MCF 10A (cell line): ENCODE measurements at regions of chr11 and their contacts with region 1.

Region 1: DNA sequence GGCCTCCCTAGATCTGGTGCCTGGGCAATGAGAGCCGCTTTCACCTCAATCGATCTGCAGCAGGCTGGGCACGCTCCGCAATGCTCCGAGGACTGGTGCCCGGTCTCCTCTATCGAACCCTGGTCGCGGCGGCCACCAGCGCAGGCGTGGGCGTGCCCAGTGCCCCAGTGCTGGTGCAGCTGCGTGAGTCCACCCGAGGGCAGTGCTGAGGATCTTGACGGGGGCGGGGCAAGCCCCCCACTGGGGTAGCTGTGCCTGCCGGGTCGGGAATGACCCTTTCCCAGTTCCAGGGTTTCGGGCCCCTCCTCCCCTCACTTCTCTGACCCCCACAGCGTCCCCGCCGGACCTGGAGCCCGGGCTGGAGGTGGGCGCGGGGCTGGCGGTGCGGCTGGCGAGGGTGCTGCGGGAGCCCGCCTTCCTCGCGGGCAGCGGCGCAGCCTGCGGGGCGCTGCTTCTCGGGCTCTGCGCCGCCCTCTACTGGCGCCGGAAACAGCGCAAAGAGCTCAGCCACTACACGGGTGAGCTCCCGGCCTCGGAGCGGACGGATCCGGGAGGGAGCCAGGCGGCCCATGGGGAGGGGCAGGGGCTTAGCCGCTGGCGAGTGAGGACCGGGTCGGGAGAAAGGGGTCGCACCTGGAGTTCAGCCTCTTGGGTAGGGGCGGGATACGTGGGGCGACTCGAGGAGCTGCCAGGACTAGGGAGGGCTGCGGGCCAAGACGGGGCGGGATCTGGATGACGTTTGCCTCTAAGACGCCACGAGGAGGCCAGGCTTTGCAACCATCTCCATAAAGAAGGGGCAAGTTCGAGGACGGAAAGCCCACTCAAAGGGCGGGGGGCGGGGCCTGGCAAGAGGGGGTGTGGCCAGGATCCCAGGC is 10.9 kb downstream of the ROBO3 start:
- DNase-seq: peak; percentile 95
- H3K4me3 Mint-ChIP-seq: peak overlapping the region; percentile 96
- H3K27ac Mint-ChIP-seq: peak overlapping the region; percentile 95
- H3K4me1 Mint-ChIP-seq: peaks cover 23% of the 10 kb centered on the region
- H3K27me3 Mint-ChIP-seq: peaks cover 20% of the 10 kb centered on the region
- CTCF ChIP-seq: peak; percentile 45

Region 2: DNA sequence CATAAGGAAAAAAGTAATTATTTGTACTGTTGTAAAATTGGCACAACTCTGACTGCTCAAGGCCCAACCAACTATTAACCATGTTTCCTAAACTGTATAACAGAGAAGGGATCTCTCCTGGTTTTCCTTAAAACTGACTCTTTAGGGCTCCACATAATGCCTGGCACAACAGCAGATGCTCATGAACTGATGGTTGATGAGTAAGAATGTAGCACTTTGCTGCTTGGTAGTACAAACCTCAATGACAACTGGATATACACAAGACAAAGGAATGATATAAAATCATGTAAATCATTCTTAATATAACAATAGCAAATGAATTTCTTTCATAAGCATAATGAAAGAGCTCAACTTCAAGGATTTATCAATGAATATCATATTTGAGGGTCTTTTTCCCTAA is 87.7 kb before region 1 on chr11:
- CTCF ChIA-PET with region 1: no interaction called
- POLR2A ChIA-PET with region 1: no interaction called
- intact Hi-C with region 1: no loop called
- DNase-seq: no peak
- H3K4me3 Mint-ChIP-seq: no peak overlapping the region
- H3K27ac Mint-ChIP-seq: no peak overlapping the region
- H3K4me1 Mint-ChIP-seq: peaks cover 16% of the 10 kb centered on the region
- H3K27me3 Mint-ChIP-seq: no peaks in the 10 kb centered on the region
- CTCF ChIP-seq: no peak

Region 3: GRCh38 chr11:124865921-124866583 is 10.1 kb before region 1 on chr11:
- CTCF ChIA-PET with region 1: interaction called, 20 read pairs
- POLR2A ChIA-PET with region 1: no interaction called
- intact Hi-C with region 1: no loop called
- DNase-seq: peak; percentile 13
- H3K4me3 Mint-ChIP-seq: peak overlapping the region; percentile 47
- H3K27ac Mint-ChIP-seq: no peak overlapping the region
- H3K4me1 Mint-ChIP-seq: no peaks in the 10 kb centered on the region
- H3K27me3 Mint-ChIP-seq: peaks cover 88% of the 10 kb centered on the region
- CTCF ChIP-seq: peak; percentile 80

Region 4: DNA sequence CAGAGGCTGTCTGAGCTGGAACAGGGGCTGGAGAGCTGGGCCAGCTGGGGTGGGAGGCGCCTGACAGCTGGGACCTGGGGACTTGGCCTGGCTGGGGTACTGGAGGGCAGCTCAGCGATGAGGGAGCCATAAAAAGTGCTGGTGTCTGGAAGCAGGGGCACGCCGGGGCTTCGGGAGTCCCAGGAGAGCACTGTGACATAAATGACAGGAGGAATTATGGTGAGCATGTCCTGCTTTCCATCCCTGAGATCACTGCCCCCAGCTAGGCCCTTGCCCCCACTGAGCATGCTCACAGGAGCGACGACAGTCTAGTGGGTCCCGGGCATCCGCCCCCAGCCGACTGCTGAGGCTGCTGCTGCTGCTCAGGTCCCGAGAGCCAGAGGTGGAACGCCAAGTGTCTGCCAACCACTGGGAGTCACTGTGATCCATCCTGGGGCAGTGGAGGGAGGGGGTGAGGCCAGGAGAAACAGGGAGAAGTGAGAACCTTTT is 15.2 kb after region 1 on chr11:
- CTCF ChIA-PET with region 1: interaction called, 12 read pairs
- POLR2A ChIA-PET with region 1: interaction called, 8 read pairs
- intact Hi-C with region 1: no loop called
- DNase-seq: no peak
- H3K4me3 Mint-ChIP-seq: no peak overlapping the region
- H3K27ac Mint-ChIP-seq: no peak overlapping the region
- H3K4me1 Mint-ChIP-seq: peaks cover 4% of the 10 kb centered on the region
- H3K27me3 Mint-ChIP-seq: no peaks in the 10 kb centered on the region
- CTCF ChIP-seq: no peak

Region 5: GRCh38 chr11:124900464-124900863 is 24.3 kb after region 1 on chr11:
- CTCF ChIA-PET with region 1: interaction called, 18 read pairs
- POLR2A ChIA-PET with region 1: interaction called, 11 read pairs
- intact Hi-C with region 1: loop called (anchors 1 kb)
- DNase-seq: peak; percentile 89
- H3K4me3 Mint-ChIP-seq: no peak overlapping the region
- H3K27ac Mint-ChIP-seq: peak overlapping the region; percentile 92
- H3K4me1 Mint-ChIP-seq: peaks cover 59% of the 10 kb centered on the region
- H3K27me3 Mint-ChIP-seq: no peaks in the 10 kb centered on the region
- CTCF ChIP-seq: no peak

Region 6: GRCh38 chr11:124920870-124921609 is 44.9 kb after region 1 on chr11:
- CTCF ChIA-PET with region 1: interaction called, 12 read pairs
- POLR2A ChIA-PET with region 1: no interaction called
- intact Hi-C with region 1: no loop called
- DNase-seq: no peak
- H3K4me3 Mint-ChIP-seq: no peak overlapping the region
- H3K27ac Mint-ChIP-seq: no peak overlapping the region
- H3K4me1 Mint-ChIP-seq: no peaks in the 10 kb centered on the region
- H3K27me3 Mint-ChIP-seq: no peaks in the 10 kb centered on the region
- CTCF ChIP-seq: no peak

Region 7: DNA sequence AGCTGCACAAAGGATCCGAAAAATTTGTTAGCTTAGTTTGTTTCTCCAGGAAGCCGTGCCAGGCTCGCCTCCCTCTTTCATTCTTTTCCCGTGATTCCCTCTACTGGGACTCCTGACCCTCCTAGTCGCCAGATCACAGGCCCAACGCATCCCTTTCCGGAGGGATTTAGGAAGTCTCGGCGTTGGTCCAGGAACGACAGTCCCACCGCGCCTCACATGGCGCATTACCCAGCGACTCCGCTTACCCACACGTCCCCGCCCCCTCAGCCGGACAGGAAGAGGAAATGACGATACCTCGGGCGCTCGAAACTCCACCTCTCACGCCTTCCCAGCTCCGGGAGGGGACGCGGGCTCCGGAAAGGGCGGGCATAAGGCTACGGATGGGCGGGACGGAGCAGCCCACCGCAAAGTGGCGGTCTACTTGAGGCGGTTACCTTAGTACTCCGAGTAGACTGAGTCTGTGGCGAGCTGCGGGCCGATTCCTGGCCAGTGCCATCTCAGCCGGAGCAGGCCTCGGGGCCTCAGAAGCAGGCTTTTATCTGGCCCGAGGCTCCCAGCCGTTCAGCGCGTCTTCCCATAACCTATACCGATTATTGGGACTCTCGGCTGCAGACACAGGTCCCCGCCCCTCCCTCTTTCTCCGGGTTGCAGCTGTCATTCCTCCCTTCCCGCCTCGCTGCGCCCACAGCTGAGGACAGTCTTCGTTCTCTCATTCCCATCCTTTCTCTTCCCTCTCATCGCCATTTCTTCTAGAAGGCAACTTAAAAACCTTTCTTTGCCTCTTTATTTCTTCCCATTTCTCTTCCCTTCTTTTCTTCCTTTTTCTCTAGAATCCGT is 77.8 kb after region 1 on chr11 and contains the start of gene CCDC15:
- CTCF ChIA-PET with region 1: interaction called, 15 read pairs
- POLR2A ChIA-PET with region 1: interaction called, 36 read pairs
- intact Hi-C with region 1: loop called (anchors 1 kb)
- DNase-seq: peak; percentile 98
- H3K4me3 Mint-ChIP-seq: no peak within 1 kb of the TSS
- H3K27ac Mint-ChIP-seq: no peak within 1 kb of the TSS
- H3K4me1 Mint-ChIP-seq: peaks cover 9% of the 10 kb centered on the region
- H3K27me3 Mint-ChIP-seq: no peaks in the 10 kb centered on the region
- CTCF ChIP-seq: no peak
- total RNA-seq, gene CCDC15: 2.8 and 3.4 TPM in 2 replicates